ENCODE measurements at regions of chr4 and their contacts with region 1.

Region 1: DNA sequence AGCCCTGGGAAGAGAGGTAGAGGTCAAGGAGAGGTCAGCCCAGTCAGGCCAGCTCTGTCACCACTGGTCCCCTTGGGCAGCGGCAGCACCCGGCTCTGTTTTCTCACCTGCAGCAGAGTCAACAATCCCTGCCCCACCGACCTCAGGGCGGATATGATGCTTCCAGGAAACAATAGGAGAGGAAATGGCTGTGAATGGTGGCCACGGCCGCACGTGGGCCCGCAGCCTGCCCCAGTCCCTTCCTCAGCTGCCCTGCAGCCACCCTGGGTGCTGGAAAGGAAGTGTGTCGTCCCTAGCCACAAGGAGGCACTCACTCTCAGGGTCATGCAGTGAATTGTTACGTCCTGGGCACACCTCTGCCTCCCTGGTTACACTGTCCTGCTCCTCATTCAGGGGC is 92.5 kb upstream of the ENPP6 start:
- DNase-seq: no peak
- H3K4me3 Mint-ChIP-seq: no peak overlapping the region
- H3K27ac Mint-ChIP-seq: peak overlapping the region; percentile 56
- H3K4me1 Mint-ChIP-seq: peaks cover 68% of the 10 kb centered on the region
- H3K27me3 Mint-ChIP-seq: no peaks in the 10 kb centered on the region

Region 2: DNA sequence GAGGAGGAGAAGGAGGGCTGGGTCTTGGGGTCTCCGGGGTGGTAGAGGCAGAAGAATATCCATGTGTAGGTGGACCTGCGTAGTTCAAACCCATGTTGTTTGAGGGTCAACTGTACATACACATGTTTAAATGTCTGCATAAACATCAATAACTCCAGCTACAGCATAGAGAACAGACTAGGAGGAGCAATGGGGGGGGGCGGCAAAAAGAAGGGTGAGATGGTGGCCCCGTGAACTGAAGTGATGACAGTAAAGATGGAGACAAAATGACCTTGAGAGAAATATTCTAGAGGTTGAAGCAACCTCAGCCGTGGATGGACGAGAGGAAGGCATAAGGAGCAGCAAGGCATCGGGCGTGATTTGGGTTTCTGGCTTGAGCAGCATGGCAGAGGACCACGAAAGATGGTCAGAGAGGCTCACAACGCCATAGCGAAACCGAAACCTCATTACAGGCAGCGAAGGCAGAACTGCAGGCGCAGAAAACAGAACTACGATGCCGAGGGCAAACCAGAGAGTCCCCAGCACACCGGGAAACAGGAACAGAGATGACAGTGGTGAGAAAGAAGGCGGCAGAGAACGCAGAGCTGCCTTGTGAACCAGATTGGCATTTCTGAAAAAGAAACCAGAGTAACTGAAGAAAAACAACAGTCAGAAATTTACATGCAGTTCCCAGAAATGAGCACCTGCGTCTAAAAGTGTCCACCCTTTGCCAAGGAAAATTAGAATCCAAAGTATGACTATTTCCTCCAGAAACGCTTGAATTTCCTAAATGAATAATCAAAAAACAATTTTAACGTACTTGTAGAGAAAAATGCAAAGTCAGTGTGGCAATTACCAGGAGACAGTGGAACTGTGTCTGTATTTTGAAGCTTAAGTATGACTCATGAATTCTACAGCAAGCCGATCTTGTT is 42.2 kb before region 1 on chr4:
- intact Hi-C with region 1: no loop called
- DNase-seq: peak; percentile 81
- H3K4me3 Mint-ChIP-seq: peak overlapping the region; percentile 74
- H3K27ac Mint-ChIP-seq: peak overlapping the region; percentile 95
- H3K4me1 Mint-ChIP-seq: peaks cover 76% of the 10 kb centered on the region
- H3K27me3 Mint-ChIP-seq: no peaks in the 10 kb centered on the region

Region 3: GRCh38 chr4:184287697-184288255 is 22.4 kb before region 1 on chr4:
- intact Hi-C with region 1: loop called (anchors 1 kb)
- DNase-seq: no peak
- H3K4me3 Mint-ChIP-seq: no peak overlapping the region
- H3K27ac Mint-ChIP-seq: peak overlapping the region; percentile 13
- H3K4me1 Mint-ChIP-seq: peaks cover 49% of the 10 kb centered on the region
- H3K27me3 Mint-ChIP-seq: no peaks in the 10 kb centered on the region

Region 4: DNA sequence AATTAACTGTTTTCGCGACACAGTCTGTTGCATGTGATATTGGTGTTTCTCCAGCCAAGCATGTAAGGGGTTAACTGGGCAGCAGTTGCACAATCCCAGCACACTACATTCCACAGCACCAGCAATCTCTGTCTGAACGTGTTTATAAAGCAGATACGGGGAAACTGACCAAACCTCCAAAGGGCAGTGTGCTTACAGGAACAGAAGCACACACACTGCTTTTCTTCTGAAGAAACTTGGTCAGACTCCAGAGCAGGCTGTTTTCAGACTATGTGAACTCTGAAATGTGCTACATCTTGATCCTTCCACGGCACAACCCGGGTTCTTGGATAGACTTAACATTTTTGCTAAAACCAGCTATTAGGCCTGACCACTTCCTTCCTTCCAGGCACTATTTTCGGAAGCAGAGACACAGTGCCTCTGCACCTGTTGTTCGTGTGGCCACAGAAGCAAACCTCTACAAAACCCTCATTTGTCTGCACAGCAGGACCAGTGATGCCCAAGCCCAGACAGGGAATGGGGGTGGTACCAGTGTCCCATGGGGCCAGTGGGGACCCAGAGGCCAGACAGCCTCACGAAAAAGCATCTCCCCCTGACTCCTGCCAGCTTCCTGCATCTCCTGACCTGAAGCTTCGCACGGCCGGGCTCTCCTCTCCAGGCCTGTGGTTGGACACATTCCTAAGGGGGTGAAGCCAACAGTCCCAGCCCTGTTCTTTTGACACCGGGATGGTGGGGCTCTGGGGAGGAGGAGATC is 74.1 kb after region 1 on chr4:
- intact Hi-C with region 1: loop called (anchors 5 kb)
- DNase-seq: no peak
- H3K4me3 Mint-ChIP-seq: peak overlapping the region; percentile 27
- H3K27ac Mint-ChIP-seq: peak overlapping the region; percentile 68
- H3K4me1 Mint-ChIP-seq: peaks cover 41% of the 10 kb centered on the region
- H3K27me3 Mint-ChIP-seq: no peaks in the 10 kb centered on the region

Measured in activated T-helper 2 cell treated with anti-CD3 and anti-CD28 coated beads, Interferon-gamma antibody, Interleukin-2, Interleukin-4, amounts not matched to agents 10 μg/mL and 5 μg/mL and 100 μg/mL, durations not matched to agents 14 hours and 24 hours and 36 hours (primary cell).